Heart right ventricle (tissue), 16 donors: ENCODE measurements at regions of chr19 and their contacts with region 1.

Region 1: DNA sequence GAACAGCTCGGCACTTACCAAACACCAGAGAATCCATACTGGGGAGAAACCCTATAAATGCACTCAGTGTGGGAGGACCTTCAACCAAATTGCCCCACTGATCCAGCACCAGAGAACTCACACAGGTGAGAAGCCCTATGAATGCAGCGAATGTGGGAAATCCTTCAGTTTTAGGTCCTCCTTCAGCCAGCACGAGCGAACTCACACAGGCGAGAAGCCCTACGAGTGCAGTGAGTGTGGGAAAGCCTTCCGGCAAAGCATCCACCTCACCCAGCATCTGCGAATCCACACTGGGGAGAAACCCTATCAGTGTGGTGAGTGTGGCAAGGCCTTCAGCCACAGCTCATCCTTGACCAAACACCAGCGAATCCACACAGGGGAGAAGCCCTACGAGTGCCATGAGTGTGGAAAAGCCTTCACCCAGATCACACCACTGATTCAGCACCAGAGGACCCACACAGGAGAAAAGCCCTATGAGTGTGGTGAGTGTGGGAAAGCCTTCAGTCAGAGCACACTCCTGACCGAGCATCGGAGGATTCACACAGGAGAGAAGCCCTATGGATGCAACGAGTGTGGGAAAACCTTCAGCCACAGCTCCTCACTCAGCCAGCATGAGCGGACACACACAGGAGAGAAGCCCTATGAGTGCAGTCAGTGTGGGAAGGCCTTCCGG is 8.3 kb downstream of the ZNF135 start:
- DNase-seq: no peak
- ATAC-seq: no peak
- H3K4me3 ChIP-seq: no peak overlapping the region
- H3K27ac ChIP-seq: no peak overlapping the region
- H3K4me1 ChIP-seq: no peaks in the 10 kb centered on the region
- H3K27me3 ChIP-seq: no peaks in the 10 kb centered on the region
- CTCF ChIP-seq: no peak

Region 2: GRCh38 chr19:58107778-58108545 is 40.6 kb after region 1 on chr19:
- intact Hi-C with region 1: loop called in 1 of 10 experiments (anchors 2 kb)
- DNase-seq: no peak
- ATAC-seq: no peak
- H3K4me3 ChIP-seq: no peak overlapping the region
- H3K27ac ChIP-seq: no peak overlapping the region
- H3K4me1 ChIP-seq: no peaks in the 10 kb centered on the region
- H3K27me3 ChIP-seq: no peaks in the 10 kb centered on the region
- CTCF ChIP-seq: no peak